Uterus (tissue), 4 donors: ENCODE measurements at regions of chr4 and their contacts with region 1.

Region 1: GRCh38 chr4:173420324-173420752 is 21.4 kb upstream of the SCRG1 start:
- DNase-seq: no peak
- H3K4me3 ChIP-seq: no peak overlapping the region
- H3K27ac ChIP-seq: no peak overlapping the region
- H3K4me1 ChIP-seq: no peaks in the 10 kb centered on the region
- H3K27me3 ChIP-seq: no peaks in the 10 kb centered on the region
- CTCF ChIP-seq: peak; percentile 38 to 58 (median 48)
- POLR2A ChIP-seq: no peak

Region 2: GRCh38 chr4:173121076-173121561 is 299.2 kb before region 1 on chr4:
- intact Hi-C with region 1: no loop called
- DNase-seq: no peak
- H3K4me3 ChIP-seq: no peak overlapping the region
- H3K27ac ChIP-seq: no peak overlapping the region
- H3K4me1 ChIP-seq: no peaks in the 10 kb centered on the region
- H3K27me3 ChIP-seq: no peaks in the 10 kb centered on the region
- CTCF ChIP-seq: no peak
- POLR2A ChIP-seq: no peak

Region 3: GRCh38 chr4:173318648-173319211 is 101.6 kb before region 1 on chr4:
- intact Hi-C with region 1: loop called (anchors 5 kb)
- DNase-seq: no peak
- H3K4me3 ChIP-seq: no peak overlapping the region
- H3K27ac ChIP-seq: no peak overlapping the region
- H3K4me1 ChIP-seq: no peaks in the 10 kb centered on the region
- H3K27me3 ChIP-seq: no peaks in the 10 kb centered on the region
- CTCF ChIP-seq: peak in 3 of 4 experiments; percentile 17 to 51 (median 49)
- POLR2A ChIP-seq: no peak

Region 4: DNA sequence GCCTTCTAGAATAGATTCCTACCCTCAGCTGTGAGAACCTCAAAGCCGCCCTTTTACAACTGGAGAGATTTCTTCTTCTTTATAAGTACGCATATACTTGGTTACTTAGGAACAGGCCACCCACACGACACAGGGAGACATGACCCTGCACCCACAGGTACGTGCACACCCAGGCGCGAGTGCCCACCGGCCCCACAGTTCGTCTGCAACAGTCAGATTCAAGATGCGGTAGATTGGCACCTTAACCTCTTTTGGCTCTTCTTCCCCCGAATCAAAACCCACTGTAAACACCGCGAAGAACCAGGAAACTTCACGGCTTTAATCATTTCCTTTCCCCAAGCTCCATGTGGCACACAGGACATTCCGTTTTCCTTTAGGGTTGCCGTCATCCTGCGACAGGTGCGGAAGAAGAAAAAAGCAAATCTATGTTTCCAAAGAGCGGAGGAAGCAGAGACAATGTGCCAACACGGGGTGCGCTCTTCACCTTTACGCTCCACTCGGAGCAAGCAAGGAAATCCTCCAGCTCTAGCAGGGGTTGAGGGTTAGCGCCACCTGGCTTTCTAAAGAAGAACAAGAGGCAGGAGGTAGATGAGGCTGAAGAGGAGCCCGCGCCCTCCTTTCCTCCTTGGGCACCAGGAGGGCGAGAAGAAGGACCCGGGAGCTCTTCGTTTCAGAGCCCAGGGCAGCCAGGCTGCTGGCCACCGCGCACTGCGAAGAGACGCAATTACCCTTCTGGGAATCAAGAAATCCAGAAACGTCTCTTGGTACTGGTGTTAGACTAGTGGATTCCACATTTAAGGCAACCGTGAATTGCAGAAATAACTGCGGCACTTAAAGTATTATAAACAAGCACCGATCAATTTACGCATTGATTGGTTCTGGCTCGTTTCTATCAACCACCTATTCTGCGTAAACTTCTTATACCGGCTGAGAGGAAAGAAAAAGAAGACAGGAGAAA is 74.0 kb after region 1 on chr4:
- intact Hi-C with region 1: loop called (anchors 5 kb)
- DNase-seq: peak; percentile 51 to 72
- H3K4me3 ChIP-seq: peak overlapping the region; percentile 6 to 37
- H3K27ac ChIP-seq: no peak overlapping the region
- H3K4me1 ChIP-seq: no peaks in the 10 kb centered on the region
- H3K27me3 ChIP-seq: no peaks in the 10 kb centered on the region
- CTCF ChIP-seq: peak; percentile 66 to 82 (median 76)
- POLR2A ChIP-seq: no peak